Tibial artery (tissue), 4 donors: ENCODE measurements at regions of chr1 and their contacts with region 1.

Region 1: GRCh38 chr1:14369526-14370213 is 228.8 kb upstream of the KAZN start:
- DNase-seq: no peak
- H3K4me3 ChIP-seq: no peak overlapping the region
- H3K27ac ChIP-seq: no peak overlapping the region
- H3K4me1 ChIP-seq: peaks cover 0 to 16% (median 8%) of the 10 kb centered on the region in 4 donors
- H3K27me3 ChIP-seq: peaks cover 0 to 31% of the 10 kb centered on the region in 2 donors
- CTCF ChIP-seq: no peak

Region 2: GRCh38 chr1:14350197-14350596 is 19.5 kb before region 1 on chr1:
- intact Hi-C with region 1: loop called (anchors 2 kb)
- DNase-seq: no peak
- H3K4me3 ChIP-seq: no peak overlapping the region
- H3K27ac ChIP-seq: no peak overlapping the region
- H3K4me1 ChIP-seq: no peaks in the 10 kb centered on the region
- H3K27me3 ChIP-seq: no peaks in the 10 kb centered on the region
- CTCF ChIP-seq: no peak

Region 3: DNA sequence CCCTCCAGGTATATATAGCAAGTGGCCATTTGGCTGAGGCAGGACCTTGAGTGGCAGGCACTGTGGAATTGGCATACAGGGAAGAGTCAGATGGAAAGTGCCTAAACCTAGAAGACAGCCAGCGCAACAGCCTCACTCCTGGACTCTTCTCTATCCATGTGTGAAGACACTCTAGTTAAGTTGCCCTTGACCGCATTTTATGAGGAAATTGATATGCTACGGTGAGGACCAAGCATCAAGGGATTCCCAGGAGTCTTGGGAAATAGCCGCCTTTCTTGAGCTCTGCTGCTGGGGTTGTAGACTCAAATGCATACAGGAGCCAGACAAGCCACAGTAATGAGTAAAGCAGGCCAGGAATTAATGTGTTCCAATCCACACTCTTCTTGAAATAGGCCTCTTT is 82.9 kb after region 1 on chr1:
- intact Hi-C with region 1: no loop called
- DNase-seq: no peak
- H3K4me3 ChIP-seq: no peak overlapping the region
- H3K27ac ChIP-seq: no peak overlapping the region
- H3K4me1 ChIP-seq: no peaks in the 10 kb centered on the region
- H3K27me3 ChIP-seq: no peaks in the 10 kb centered on the region
- CTCF ChIP-seq: no peak

Region 4: GRCh38 chr1:14765773-14766172 is 396.1 kb after region 1 on chr1:
- intact Hi-C with region 1: no loop called
- DNase-seq: no peak
- H3K4me3 ChIP-seq: no peak overlapping the region
- H3K27ac ChIP-seq: no peak overlapping the region
- H3K4me1 ChIP-seq: no peaks in the 10 kb centered on the region
- H3K27me3 ChIP-seq: peaks cover 0 to 38% of the 10 kb centered on the region in 2 donors
- CTCF ChIP-seq: no peak

Region 5: GRCh38 chr1:14880091-14880833 is 510.6 kb after region 1 on chr1:
- intact Hi-C with region 1: no loop called
- DNase-seq: peak; percentile 50 to 73
- H3K4me3 ChIP-seq: no peak overlapping the region
- H3K27ac ChIP-seq: no peak overlapping the region
- H3K4me1 ChIP-seq: no peaks in the 10 kb centered on the region
- H3K27me3 ChIP-seq: peaks cover 0 to 13% of the 10 kb centered on the region in 2 donors
- CTCF ChIP-seq: no peak